Psoas muscle (tissue), 8 donors: ENCODE measurements at regions of chr5 and their contacts with region 1.

Region 1: DNA sequence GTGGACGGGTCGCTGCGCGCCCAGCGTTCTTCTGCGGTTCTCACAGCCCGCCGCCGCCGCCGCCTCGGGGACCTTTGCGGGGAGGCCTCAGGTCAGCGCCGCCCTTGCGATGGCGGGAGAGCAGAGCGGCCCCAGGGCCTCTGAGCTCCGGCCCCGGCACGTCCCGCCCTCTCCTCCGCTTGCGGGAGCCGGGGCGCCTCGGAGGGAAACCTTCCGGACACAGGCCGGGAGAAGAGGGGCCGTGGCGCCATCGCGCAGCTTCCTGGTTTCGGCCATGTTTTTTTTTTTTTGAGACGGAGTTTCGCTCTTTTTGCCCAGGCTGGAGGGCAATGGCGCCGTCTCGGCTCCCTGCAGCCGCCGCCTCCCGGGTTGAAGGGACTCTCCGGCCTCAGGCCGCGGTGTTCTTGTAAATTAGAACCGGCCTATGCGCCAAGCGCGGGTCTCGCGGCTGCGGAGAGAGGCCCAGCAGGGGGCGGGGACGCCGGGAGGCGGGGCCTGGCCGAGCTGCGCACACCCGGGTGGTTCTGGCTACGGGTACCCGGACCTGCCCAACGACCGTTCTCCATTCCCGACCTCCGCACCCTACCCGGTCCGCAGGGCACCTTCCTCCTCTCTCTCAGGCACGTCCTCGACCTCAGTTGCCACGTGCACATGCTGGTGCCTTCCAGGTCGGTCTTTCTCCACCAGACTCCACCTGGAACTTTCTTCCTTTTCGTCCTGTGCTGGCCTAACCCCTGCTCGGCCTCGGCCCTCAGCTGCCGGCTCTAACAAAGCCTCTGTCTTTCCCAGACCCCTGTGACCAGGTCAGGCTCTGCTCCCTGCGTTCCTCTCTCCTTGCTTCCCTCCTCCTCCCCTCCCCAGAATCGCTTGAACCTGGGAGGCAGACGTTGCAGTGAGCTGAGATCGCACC is 28.8 kb upstream of the MGAT1 start:
- DNase-seq: peak; percentile 86 to 92
- ATAC-seq: peak; percentile 97 to 98 (median 98)
- H3K4me3 ChIP-seq: peak overlapping the region; percentile 81
- H3K27ac ChIP-seq: peak overlapping the region; percentile 95
- H3K4me1 ChIP-seq: peaks cover 22% of the 10 kb centered on the region
- H3K27me3 ChIP-seq: no peaks in the 10 kb centered on the region
- CTCF ChIP-seq: peak; percentile 32

Region 2: DNA sequence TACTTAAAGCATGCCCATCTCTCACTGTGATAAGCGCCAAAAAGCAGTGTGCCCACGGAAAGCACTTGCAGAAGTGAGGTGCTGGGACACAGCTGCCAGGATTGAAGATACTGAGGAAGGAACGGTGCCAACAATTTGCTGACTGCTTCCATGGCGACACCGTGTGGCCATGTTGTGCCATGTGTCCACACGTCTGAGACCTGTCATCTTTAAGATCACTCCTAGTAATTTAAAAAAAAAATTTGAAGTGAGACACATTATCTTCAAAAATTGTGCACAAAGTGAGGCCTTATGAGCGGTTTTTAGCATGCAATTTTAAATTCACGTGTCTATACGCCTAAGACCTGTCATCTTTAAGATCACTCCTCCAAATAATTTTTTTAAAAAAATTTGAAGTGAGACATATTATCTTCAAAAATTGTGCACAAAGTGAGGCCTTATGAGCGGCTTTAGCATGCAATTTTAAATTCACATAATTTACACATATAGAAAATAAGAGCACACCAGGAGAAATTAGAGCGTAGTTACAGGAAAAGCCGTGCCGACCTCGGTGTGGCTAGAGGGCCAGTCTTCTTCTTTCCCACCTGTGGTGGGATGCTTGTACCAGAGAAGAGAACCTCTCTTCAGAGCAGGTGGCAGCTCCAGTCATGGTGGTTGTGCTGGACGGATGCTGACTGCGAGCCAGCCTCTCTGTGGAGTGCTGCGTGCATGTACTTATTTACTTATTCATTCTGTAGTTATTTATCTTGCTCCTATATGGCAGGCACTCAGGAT is 160.6 kb before region 1 on chr5:
- intact Hi-C with region 1: no loop called
- DNase-seq: no peak
- ATAC-seq: no peak
- H3K4me3 ChIP-seq: no peak overlapping the region
- H3K27ac ChIP-seq: no peak overlapping the region
- H3K4me1 ChIP-seq: no peaks in the 10 kb centered on the region
- H3K27me3 ChIP-seq: peaks cover 0 to 21% (median 4%) of the 10 kb centered on the region in 3 donors
- CTCF ChIP-seq: peak; percentile 53

Region 3: DNA sequence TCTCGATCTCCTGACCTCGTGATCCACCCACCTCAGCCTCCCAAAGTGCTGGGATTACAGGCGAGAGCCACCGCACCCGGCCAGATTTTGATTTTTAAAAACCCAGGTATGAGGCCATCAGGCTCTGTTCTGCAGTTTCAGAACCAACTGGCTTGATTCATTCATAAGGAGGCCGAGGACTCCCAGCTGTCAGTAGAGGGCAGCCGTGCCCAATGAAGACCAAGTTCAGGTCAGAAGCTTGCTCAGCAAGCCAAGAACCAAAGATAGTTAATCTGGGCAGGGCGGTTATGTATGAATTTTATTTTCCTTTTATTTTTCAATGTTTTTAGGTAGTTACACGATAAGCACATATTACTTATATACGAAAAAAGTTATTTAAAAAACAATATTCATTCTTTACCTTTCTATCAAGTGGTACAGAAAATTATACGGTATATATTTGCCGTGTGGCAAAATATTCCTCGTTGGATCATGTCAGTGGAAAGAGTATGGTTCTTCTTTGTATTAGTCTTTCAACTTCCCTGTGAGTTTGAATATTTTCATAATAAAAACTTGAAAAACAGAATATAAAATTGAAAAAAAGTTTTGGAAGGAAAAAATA is 46.8 kb before region 1 on chr5:
- intact Hi-C with region 1: loop called in 1 of 2 experiments (anchors 10 kb)
- DNase-seq: peak; percentile 81 to 90
- ATAC-seq: peak; percentile 78 to 91 (median 84)
- H3K4me3 ChIP-seq: peak overlapping the region; percentile 15
- H3K27ac ChIP-seq: no peak overlapping the region
- H3K4me1 ChIP-seq: peaks cover 20% of the 10 kb centered on the region
- H3K27me3 ChIP-seq: no peaks in the 10 kb centered on the region
- CTCF ChIP-seq: peak; percentile 82

Region 4: DNA sequence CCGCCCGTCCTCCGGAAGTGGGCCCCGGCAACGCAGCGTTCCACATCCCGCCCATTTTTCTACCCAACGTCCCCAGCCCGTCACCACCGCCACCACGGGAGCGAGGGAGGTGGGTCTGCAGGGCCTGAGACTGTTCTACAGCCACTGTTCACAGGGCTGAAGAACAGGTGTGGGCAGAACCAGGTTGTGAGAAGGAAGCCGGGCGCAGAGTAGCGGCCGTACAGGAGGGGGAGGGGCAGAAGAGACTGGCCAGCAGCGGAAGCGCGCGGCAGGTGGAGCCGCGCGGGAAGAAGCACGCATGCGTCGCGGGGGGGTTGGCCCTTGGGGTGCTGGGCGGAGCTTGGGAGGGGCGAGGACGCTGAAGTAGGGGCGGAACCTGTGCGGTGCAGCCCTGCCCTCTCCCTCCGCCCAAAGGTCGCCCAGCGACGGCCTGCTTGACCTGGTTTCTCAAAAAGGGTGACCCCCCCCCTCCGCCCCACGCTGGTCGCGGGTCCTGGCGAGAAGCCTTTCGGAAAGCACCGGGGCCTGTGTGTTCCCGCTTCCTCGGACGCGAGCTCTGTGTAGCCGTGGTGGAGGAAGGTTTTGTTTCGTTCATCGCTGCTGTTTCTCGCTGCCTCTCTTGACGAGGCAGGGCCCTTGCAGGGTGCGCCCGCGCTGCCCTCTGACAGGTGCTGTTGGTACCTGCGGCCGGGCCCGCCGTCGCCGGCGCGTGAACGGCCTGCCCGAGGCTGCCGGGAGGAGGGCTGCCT is 21.0 kb before region 1 on chr5:
- intact Hi-C with region 1: loop called in 1 of 2 experiments (anchors 2 kb)
- DNase-seq: peak; percentile 96 to 99
- ATAC-seq: peak; percentile 92 to 96 (median 94)
- H3K4me3 ChIP-seq: peak overlapping the region; percentile 93
- H3K27ac ChIP-seq: peak overlapping the region; percentile 99
- H3K4me1 ChIP-seq: peaks cover 51% of the 10 kb centered on the region
- H3K27me3 ChIP-seq: no peaks in the 10 kb centered on the region
- CTCF ChIP-seq: no peak

Region 5: DNA sequence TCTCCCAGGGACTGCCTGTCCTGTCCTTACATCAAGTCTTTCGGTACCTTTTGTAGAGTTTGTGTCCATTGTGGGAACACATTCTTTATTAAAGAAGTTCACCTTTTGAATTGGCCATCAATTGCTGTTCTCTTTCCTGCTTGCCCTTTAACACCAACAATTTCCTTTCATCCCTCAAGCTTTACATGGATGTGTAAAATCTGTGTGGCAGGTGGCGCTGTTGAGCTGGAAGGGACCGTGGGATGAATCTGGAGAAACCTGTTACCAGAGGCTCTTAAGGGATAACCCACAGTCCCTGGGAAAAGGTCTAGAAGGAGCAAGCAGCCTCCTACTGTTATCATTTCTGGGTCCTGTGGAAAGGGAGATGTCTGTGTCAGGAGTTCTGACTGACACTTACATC is 37.6 kb after region 1 on chr5:
- intact Hi-C with region 1: loop called in 1 of 2 experiments (anchors 5 kb)
- DNase-seq: peak; percentile 75 to 84
- ATAC-seq: peak in 3 of 4 donors; percentile 55 to 85 (median 72)
- H3K4me3 ChIP-seq: no peak overlapping the region
- H3K27ac ChIP-seq: no peak overlapping the region
- H3K4me1 ChIP-seq: no peaks in the 10 kb centered on the region
- H3K27me3 ChIP-seq: peaks cover 0 to 6% (median 0%) of the 10 kb centered on the region in 3 donors
- CTCF ChIP-seq: peak; percentile 67

Region 6: GRCh38 chr5:180975338-180975737 is 143.9 kb after region 1 on chr5:
- intact Hi-C with region 1: no loop called
- DNase-seq: no peak
- ATAC-seq: no peak
- H3K4me3 ChIP-seq: no peak overlapping the region
- H3K27ac ChIP-seq: no peak overlapping the region
- H3K4me1 ChIP-seq: no peaks in the 10 kb centered on the region
- H3K27me3 ChIP-seq: no peaks in the 10 kb centered on the region
- CTCF ChIP-seq: no peak